ENCODE measurements at regions of chr19 and their contacts with region 1.

Region 1: GRCh38 chr19:6862673-6863078 is 24.7 kb upstream of the ADGRE1 start:
- DNase-seq: peak; percentile 49 to 88
- H3K4me3 ChIP-seq: no peak overlapping the region
- H3K27ac ChIP-seq: no peak overlapping the region
- H3K4me1 ChIP-seq: no peaks in the 10 kb centered on the region
- H3K27me3 ChIP-seq: no peaks in the 10 kb centered on the region
- CTCF ChIP-seq: peak; percentile 85 to 97 (median 93)
- EP300 ChIP-seq: no peak
- POLR2A ChIP-seq: no peak
- RAD21 ChIP-seq: peak; percentile 91 to 92

Region 2: GRCh38 chr19:6516659-6517291 is 345.9 kb before region 1 on chr19:
- CTCF ChIA-PET with region 1: interaction called, 12 read pairs
- POLR2A ChIA-PET with region 1: interaction called, 3 read pairs
- DNase-seq: peak in 1 of 2 experiments; percentile 98
- H3K4me3 ChIP-seq: peak overlapping the region; percentile 38 to 70 (median 67)
- H3K27ac ChIP-seq: no peak overlapping the region
- H3K4me1 ChIP-seq: peaks cover 0 to 4% (median 1%) of the 10 kb centered on the region in 4 experiments; a peak in 2 of 7 replicates
- H3K27me3 ChIP-seq: peaks cover 0 to 2% (median 0%) of the 10 kb centered on the region in 4 experiments; a peak in 1 of 7 replicates
- CTCF ChIP-seq: peak; percentile 85 to 95 (median 92)
- EP300 ChIP-seq: no peak
- POLR2A ChIP-seq: no peak
- RAD21 ChIP-seq: peak; percentile 93 to 97

Region 3: DNA sequence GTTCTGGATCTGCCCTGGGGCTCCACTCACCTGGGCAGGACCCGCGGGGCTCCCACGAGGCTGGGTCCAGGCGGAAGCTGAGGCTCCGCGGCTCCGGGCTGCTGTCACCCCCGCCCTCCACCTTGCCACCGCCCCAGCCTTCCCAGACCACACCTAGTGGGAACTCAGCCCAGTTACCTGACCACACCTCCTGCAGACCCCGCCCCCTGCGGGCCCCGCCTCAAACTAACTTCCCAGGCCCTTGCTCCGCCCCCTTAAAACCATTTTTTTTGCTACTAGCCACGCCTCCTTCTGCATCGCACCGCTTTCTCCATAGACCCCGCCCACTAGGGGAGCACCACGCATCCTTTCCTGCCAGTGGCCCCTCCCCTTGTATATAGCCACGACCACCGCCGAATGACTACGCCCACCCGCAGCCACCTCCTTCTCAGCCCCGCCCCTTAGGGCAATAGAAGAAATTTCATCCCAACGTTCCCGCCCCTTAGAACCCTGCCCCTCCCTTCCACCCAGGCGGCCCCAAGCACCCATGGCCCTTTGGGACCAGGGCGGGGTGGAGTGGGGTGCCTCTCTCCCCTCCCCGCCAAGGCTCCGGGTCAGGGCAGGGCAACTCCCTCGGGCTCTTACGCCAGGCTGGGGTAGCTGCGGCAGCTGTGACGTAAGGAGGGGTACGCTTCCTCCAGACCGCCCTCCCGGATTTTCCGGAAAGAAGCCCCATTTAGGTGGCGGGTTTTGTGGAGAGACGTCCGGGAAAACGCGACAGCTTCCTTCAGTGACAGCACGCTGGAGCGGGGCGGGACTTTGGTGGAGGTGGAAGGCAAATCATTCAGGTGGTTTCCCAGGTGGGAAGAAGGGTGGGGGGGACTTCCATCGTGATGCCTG is 95.1 kb before region 1 on chr19 and contains the start of gene SH2D3A:
- CTCF ChIA-PET with region 1: interaction called, 28 read pairs
- POLR2A ChIA-PET with region 1: interaction called, 3 read pairs
- DNase-seq: peak; percentile 96 to 98
- H3K4me3 ChIP-seq: peak within 1 kb of the TSS; percentile 61 to 84 (median 83)
- H3K27ac ChIP-seq: peak within 1 kb of the TSS; percentile 57
- H3K4me1 ChIP-seq: peaks cover 3 to 7% (median 5%) of the 10 kb centered on the region in 4 experiments; a peak in 6 of 7 replicates
- H3K27me3 ChIP-seq: no peaks in the 10 kb centered on the region
- CTCF ChIP-seq: no peak
- EP300 ChIP-seq: 0 out of 3 replicates have a peak, but pooled peaks of 1 of the 2 experiments have one; percentile 29
- POLR2A ChIP-seq: peak in 1 of 2 experiments; percentile 79; a peak in 2 of 3 replicates
- RAD21 ChIP-seq: no peak
- total RNA-seq, gene SH2D3A: 20.0 and 22.1 TPM in 2 replicates